ENCODE measurements at regions of chr16 and their contacts with region 1.

Region 1: DNA sequence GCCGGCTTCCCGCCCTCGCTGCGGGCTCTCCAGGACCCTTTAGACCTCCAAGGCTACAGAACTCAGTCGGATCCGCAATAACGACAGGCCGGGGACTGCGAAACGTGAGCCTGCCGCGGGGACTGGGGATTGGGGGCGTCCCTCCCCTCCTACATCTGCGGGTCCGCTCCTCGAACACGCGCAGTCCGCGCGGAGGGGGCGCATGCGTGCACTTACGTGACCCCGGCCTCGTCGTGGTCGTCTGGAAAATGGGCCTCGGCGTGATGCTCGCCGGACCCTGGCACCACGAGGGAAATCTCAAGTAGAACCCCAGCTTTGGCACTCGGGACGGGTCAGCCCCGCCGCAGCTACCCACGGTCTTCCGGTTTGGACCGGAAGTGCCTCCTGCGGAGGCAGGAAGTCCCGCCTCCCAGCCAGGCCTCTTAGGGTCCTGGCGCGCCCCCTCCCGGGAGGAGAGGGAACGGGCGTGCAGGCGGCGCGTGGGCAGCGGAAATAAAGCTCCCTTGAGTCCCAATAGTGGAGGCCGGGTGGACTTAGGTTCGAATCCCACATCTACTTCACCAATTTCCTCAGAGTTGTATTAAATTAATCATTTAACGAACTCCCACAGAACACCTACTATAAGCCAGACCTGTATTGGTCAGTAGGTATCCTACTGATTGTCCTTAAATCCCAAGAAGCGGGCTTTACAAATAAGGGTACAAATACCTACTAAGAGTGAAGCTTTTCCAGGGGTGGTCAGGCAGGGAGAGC is at the start of gene TAF1C:
- DNase-seq: peak; percentile 93 to 95
- H3K4me3 ChIP-seq: peak within 1 kb of the TSS; percentile 92 to 94
- H3K27ac ChIP-seq: peak within 1 kb of the TSS; percentile 76 to 90
- H3K4me1 ChIP-seq: peaks cover 0 to 22% (median 10%) of the 10 kb centered on the region in 4 donors
- H3K27me3 ChIP-seq: no peaks in the 10 kb centered on the region
- CTCF ChIP-seq: peak; percentile 96 to 98

Region 2: DNA sequence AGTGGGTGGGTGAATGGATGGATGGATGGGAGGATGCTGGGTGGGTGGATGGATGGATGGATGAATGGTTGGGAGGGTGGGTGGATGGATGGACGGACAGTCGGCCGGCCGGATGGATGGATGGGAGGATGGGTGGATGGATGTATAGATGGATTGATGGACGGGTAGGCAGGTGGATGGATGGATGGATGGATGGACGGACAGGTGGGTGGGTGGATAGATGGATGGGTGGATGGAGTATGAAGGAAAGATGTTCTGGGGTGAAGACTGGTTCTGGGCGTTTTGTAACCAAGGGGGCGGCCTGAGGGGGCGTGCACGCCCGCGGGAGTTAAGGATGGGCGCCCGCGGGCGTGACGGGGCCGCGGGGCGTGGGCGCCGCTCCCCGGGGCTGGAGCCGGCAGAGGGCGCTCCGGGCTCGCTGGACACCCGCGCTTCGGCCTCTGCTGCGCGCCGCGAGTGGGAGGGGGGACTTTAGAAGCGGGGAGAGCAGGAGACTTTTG is 219.0 kb before region 1 on chr16 and contains the start of gene NECAB2:
- intact Hi-C with region 1: loop called (anchors 10 kb)
- DNase-seq: no peak
- H3K4me3 ChIP-seq: peak within 1 kb of the TSS; percentile 31 to 44
- H3K27ac ChIP-seq: no peak within 1 kb of the TSS
- H3K4me1 ChIP-seq: peaks cover 0 to 23% (median 13%) of the 10 kb centered on the region in 4 donors
- H3K27me3 ChIP-seq: peaks cover 0 to 24% of the 10 kb centered on the region in 2 donors
- CTCF ChIP-seq: peak; percentile 29 to 64

Region 3: DNA sequence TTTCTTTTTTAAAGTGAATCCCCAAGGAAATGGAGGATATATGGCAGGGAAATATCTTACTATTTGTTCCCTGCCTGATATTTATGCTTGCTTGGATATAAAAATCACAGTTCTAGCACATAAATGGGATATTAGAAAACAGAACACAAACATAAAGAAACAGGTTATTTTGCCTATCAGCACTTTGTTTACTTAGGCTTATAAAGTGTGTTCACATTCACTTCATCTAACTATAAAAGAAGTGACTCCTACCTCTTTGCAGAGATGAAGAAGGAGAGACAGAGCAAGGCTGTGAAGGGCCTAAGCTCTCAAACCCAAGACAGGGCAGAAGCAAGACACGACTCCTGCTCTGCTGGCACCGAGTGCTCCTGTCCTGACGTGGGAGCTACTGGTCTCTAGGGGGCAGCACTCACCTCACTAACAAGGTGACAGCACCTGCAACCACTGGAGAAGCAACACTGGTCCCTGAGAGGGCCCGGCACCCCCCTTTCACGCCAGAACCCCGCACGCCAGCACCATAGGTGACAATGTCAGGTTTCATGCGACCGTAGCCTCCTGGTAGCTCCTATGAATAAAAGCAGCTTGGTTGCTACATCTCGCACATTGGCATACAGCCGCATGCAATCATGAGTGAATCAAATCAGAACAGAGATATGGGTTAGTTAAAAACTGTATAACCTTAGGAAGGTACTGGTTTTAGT is 102.1 kb before region 1 on chr16:
- intact Hi-C with region 1: loop called (anchors 10 kb)
- DNase-seq: no peak
- H3K4me3 ChIP-seq: no peak overlapping the region
- H3K27ac ChIP-seq: no peak overlapping the region
- H3K4me1 ChIP-seq: peaks cover 0 to 15% (median 13%) of the 10 kb centered on the region in 4 donors
- H3K27me3 ChIP-seq: no peaks in the 10 kb centered on the region
- CTCF ChIP-seq: peak; percentile 48 to 56

Measured in tibial artery (tissue), 4 donors.